ENCODE measurements at regions of chr4 and their contacts with region 1.

Region 1: GRCh38 chr4:152640058-152640833 is 39.6 kb downstream of the TMEM154 start:
- DNase-seq: peak in 1 of 2 experiments; percentile 10
- H3K4me3 ChIP-seq: no peak overlapping the region
- H3K4me3 Mint-ChIP-seq: no peak overlapping the region
- H3K27ac Mint-ChIP-seq: no peak overlapping the region
- H3K4me1 ChIP-seq: no peaks in the 10 kb centered on the region
- H3K4me1 Mint-ChIP-seq: no peaks in the 10 kb centered on the region
- H3K27me3 ChIP-seq: no peaks in the 10 kb centered on the region
- H3K27me3 Mint-ChIP-seq: no peaks in the 10 kb centered on the region
- CTCF ChIP-seq: peak; percentile 42 to 58

Region 2: DNA sequence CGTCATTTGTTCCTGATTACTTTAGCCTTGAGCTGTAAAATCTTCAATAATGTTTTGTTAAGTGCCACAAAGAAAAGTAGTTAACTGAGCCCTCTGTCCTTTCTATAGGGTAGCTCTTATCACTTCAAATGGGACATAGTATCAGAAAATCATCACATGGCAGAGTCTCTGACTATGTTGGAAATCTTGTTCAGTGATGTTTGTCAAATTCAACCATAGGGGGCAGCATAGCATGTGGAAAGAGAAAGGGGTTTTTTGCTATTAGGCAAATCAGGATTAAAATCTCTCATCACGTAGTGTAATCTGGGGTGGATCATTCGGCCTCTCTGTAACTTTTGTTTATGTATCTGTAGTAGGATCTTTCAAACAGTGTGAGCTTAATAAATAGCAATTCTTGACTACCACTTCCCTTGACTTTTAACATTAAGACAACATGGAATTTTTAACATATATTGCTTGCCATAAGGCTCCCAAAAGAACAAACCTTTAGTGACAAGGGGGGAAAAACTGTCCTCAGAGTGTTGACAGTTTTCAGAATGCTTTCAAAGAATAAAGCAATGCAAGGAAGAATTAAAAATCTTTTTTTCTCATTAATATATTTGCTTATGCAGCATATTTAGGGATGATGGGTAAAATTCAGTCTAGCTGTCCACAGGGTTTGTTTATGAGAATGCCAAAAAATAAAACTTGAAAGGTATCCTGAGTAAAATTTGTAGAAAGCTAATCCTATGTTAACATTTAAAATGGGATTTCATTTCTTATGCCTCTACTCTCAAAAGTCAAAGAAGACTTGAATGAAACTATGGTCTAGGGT is 231.5 kb before region 1 on chr4:
- CTCF ChIA-PET with region 1: interaction called, 4 read pairs
- POLR2A ChIA-PET with region 1: no interaction called
- intact Hi-C with region 1: loop called (anchors 2 kb)
- DNase-seq: peak in 1 of 2 experiments; percentile 56
- H3K4me3 ChIP-seq: no peak overlapping the region
- H3K4me3 Mint-ChIP-seq: no peak overlapping the region
- H3K27ac Mint-ChIP-seq: no peak overlapping the region
- H3K4me1 ChIP-seq: 0 out of 2 replicates have a peak, but pooled peaks cover 1% of the 10 kb centered on the region
- H3K4me1 Mint-ChIP-seq: no peaks in the 10 kb centered on the region
- H3K27me3 ChIP-seq: no peaks in the 10 kb centered on the region
- H3K27me3 Mint-ChIP-seq: no peaks in the 10 kb centered on the region
- CTCF ChIP-seq: peak; percentile 54 to 55

Region 3: DNA sequence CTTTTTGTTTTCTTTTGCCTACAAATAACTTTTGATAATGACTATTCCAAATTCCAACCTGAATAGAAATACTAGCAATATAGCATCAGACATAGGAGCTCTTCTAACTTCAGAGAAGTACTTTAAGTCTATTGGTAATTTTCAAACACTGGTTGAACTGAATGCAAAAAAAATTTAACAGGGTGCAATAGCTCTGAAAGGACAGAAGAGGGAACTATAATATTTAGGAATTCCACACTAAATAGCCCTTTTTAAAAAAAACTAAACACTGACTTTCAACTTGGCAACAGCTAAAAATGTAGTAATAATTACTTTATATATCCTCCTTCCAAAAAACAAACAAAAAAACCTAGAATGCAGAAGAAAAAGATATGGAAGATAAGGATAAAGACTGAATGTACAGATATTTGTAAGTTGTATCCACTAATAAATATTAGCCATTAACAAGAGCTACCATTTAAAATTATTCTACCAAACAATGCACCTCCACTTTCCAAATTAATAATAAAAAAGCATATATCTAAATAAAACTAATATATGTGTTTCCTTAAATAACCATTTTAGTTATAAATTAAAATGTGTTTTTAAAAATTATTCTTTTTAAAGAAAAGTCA is 185.7 kb before region 1 on chr4:
- CTCF ChIA-PET with region 1: interaction called, 8 read pairs
- POLR2A ChIA-PET with region 1: no interaction called
- intact Hi-C with region 1: loop called (anchors 1 kb)
- DNase-seq: no peak
- H3K4me3 ChIP-seq: no peak overlapping the region
- H3K4me3 Mint-ChIP-seq: no peak overlapping the region
- H3K27ac Mint-ChIP-seq: no peak overlapping the region
- H3K4me1 ChIP-seq: peaks cover 6% of the 10 kb centered on the region; the same call in 1 of the 2 replicates
- H3K4me1 Mint-ChIP-seq: peaks cover 20% of the 10 kb centered on the region
- H3K27me3 ChIP-seq: no peaks in the 10 kb centered on the region
- H3K27me3 Mint-ChIP-seq: no peaks in the 10 kb centered on the region
- CTCF ChIP-seq: peak; percentile 31 to 57

Region 4: GRCh38 chr4:152460488-152460887 is 179.8 kb before region 1 on chr4:
- CTCF ChIA-PET with region 1: no interaction called
- POLR2A ChIA-PET with region 1: no interaction called
- intact Hi-C with region 1: loop called (anchors 1 kb)
- DNase-seq: peak in 1 of 2 experiments; percentile 47
- H3K4me3 ChIP-seq: no peak overlapping the region
- H3K4me3 Mint-ChIP-seq: no peak overlapping the region
- H3K27ac Mint-ChIP-seq: no peak overlapping the region
- H3K4me1 ChIP-seq: peaks cover 27% of the 10 kb centered on the region
- H3K4me1 Mint-ChIP-seq: peaks cover 22% of the 10 kb centered on the region
- H3K27me3 ChIP-seq: no peaks in the 10 kb centered on the region
- H3K27me3 Mint-ChIP-seq: no peaks in the 10 kb centered on the region
- CTCF ChIP-seq: peak in 1 of 2 experiments; percentile 17

Region 5: GRCh38 chr4:152500800-152501434 is 139.3 kb before region 1 on chr4:
- CTCF ChIA-PET with region 1: interaction called, 20 read pairs
- POLR2A ChIA-PET with region 1: no interaction called
- intact Hi-C with region 1: loop called (anchors 1 kb)
- DNase-seq: peak; percentile 56 to 78
- H3K4me3 ChIP-seq: no peak overlapping the region
- H3K4me3 Mint-ChIP-seq: no peak overlapping the region
- H3K27ac Mint-ChIP-seq: no peak overlapping the region
- H3K4me1 ChIP-seq: peaks cover 12% of the 10 kb centered on the region
- H3K4me1 Mint-ChIP-seq: peaks cover 13% of the 10 kb centered on the region
- H3K27me3 ChIP-seq: no peaks in the 10 kb centered on the region
- H3K27me3 Mint-ChIP-seq: no peaks in the 10 kb centered on the region
- CTCF ChIP-seq: peak; percentile 58 to 75

Region 6: GRCh38 chr4:152581536-152582160 is 58.6 kb before region 1 on chr4:
- CTCF ChIA-PET with region 1: no interaction called
- POLR2A ChIA-PET with region 1: no interaction called
- intact Hi-C with region 1: loop called (anchors 2 kb)
- DNase-seq: peak; percentile 27 to 44
- H3K4me3 ChIP-seq: no peak overlapping the region
- H3K4me3 Mint-ChIP-seq: no peak overlapping the region
- H3K27ac Mint-ChIP-seq: peak overlapping the region; percentile 16
- H3K4me1 ChIP-seq: peaks cover 24% of the 10 kb centered on the region
- H3K4me1 Mint-ChIP-seq: peaks cover 25% of the 10 kb centered on the region
- H3K27me3 ChIP-seq: no peaks in the 10 kb centered on the region
- H3K27me3 Mint-ChIP-seq: no peaks in the 10 kb centered on the region
- CTCF ChIP-seq: peak in 1 of 2 experiments; percentile 24

Region 7: DNA sequence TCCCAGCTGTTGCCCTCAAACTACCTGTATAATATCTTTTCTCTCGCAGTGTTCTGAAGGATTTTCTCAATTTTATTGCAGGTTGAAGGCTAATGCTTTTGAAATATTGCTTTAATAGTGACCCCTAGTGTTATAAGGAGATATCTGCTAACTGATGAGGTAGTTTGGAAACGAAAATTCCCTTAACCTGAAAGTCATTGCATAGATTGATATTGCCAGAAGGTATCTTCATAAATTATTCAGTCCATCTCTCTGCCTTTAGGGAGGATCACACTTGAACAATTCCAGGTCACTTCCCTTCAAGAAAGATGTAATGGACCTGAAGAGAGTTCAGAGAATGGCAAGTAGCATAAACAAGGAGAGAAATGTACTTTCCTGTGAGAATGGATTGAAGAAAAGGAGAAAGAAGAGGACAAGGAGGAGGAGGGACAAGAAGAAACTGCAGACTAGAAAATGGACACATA is 95.2 kb after region 1 on chr4:
- CTCF ChIA-PET with region 1: no interaction called
- POLR2A ChIA-PET with region 1: no interaction called
- intact Hi-C with region 1: loop called (anchors 2 kb)
- DNase-seq: no peak
- H3K4me3 ChIP-seq: no peak overlapping the region
- H3K4me3 Mint-ChIP-seq: no peak overlapping the region
- H3K27ac Mint-ChIP-seq: no peak overlapping the region
- H3K4me1 ChIP-seq: 0 out of 2 replicates have a peak, but pooled peaks cover 4% of the 10 kb centered on the region
- H3K4me1 Mint-ChIP-seq: peaks cover 9% of the 10 kb centered on the region
- H3K27me3 ChIP-seq: no peaks in the 10 kb centered on the region
- H3K27me3 Mint-ChIP-seq: no peaks in the 10 kb centered on the region
- CTCF ChIP-seq: peak; percentile 45 to 47

Region 8: DNA sequence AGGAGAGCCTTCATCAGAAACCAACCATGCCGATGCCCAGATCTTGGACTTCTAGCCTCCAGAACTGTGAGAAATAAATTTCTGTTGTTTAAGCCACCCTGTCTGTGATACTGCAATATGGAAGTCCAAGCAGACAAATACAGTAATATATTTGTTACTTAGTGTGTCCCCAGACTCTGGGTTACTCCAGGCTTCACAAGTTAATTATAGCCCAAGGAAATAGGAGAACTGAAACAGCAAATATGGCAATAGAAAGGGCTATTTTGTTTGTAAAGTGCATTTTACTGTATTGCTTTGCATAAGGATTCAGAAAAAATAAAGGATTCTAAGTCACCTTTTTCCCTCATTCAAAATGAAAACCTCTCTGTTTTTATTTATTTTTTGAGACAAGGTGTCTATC is 123.5 kb after region 1 on chr4:
- CTCF ChIA-PET with region 1: no interaction called
- POLR2A ChIA-PET with region 1: no interaction called
- intact Hi-C with region 1: no loop called
- DNase-seq: no peak
- H3K4me3 ChIP-seq: no peak overlapping the region
- H3K4me3 Mint-ChIP-seq: no peak overlapping the region
- H3K27ac Mint-ChIP-seq: no peak overlapping the region
- H3K4me1 ChIP-seq: no peaks in the 10 kb centered on the region
- H3K4me1 Mint-ChIP-seq: no peaks in the 10 kb centered on the region
- H3K27me3 ChIP-seq: no peaks in the 10 kb centered on the region
- H3K27me3 Mint-ChIP-seq: no peaks in the 10 kb centered on the region
- CTCF ChIP-seq: no peak

Measured in Caco-2 (cell line).